ENCODE measurements at regions of chr1 and their contacts with region 1.

Region 1: DNA sequence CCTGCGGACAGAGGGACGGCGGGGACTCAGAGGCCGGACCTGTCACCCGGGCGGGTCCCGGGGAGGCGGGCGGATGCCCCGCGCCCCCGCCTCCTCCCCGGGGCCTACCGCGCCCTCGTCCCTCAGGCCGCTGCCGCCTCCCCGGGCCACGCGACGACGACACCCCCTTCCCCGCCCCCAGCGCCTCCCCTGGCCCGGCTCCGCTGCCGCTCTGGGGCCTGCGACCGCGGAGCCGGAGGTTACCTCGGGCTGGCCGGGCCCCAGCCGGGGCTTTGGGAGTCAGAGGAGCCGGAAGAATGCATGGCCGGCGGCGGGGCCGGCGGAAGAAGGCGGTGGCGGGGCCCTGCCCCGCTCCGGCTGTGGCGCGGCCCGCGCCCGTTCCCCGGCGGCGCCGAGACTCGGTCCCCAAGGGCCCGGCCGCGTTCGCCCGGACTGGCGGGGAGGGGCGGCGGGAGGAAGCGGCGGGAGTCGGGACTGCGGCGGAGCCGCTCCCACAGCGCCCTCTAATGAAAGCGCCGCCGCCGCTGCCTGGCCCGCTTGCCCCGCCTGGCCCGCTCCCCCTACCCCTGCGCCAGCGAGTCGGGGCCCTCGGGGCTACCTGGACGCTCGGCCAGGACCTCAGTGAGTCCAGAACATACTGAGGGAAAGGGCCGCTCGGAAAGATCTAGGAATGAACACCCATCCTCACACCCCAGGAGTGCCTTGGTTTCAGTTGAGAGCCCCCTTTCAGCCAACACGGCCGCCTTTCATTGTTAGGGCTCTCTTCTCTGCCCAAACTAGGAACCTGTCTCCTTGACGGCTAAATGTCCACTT is at the start of gene LPGAT1:
- DNase-seq: peak; percentile 86
- ATAC-seq: peak; percentile 83
- H3K4me3 Mint-ChIP-seq: peak within 1 kb of the TSS; percentile 82
- H3K27ac Mint-ChIP-seq: peak within 1 kb of the TSS; percentile 85
- H3K4me1 Mint-ChIP-seq: peaks cover 57% of the 10 kb centered on the region
- H3K27me3 Mint-ChIP-seq: no peaks in the 10 kb centered on the region
- total RNA-seq, gene LPGAT1: 21.7 to 24.9 TPM

Region 2: GRCh38 chr1:211680752-211681327 is 149.7 kb before region 1 on chr1:
- CTCF ChIA-PET with region 1: interaction called, 5 read pairs
- POLR2A ChIA-PET with region 1: no interaction called
- intact Hi-C with region 1: loop called (anchors 1 to 5 kb)
- DNase-seq: peak; percentile 85
- ATAC-seq: peak; percentile 94
- H3K4me3 Mint-ChIP-seq: no peak overlapping the region
- H3K27ac Mint-ChIP-seq: peak overlapping the region; percentile 71
- H3K4me1 Mint-ChIP-seq: peaks cover 7% of the 10 kb centered on the region
- H3K27me3 Mint-ChIP-seq: no peaks in the 10 kb centered on the region

Region 3: DNA sequence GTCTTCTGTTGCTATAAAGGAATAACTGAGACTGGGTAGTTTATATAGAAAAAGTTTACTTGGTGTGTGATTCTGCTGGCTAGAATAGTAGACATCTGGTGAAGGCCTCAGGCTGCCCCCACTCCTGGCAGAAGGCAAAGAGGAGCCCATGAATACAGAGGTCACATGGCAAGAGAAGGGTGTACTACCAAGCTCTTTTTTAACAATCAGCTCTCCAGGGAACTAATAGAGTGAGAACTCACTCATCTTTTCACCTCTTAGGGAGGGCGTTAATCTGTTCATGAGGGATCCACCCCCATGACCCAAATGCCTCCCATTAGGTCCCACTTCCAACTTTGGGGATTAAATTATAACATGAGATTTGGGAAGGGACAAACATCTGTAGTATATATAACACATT is 214.3 kb after region 1 on chr1:
- CTCF ChIA-PET with region 1: no interaction called
- POLR2A ChIA-PET with region 1: no interaction called
- intact Hi-C with region 1: no loop called
- DNase-seq: no peak
- ATAC-seq: no peak
- H3K4me3 Mint-ChIP-seq: no peak overlapping the region
- H3K27ac Mint-ChIP-seq: no peak overlapping the region
- H3K4me1 Mint-ChIP-seq: peaks cover 10% of the 10 kb centered on the region
- H3K27me3 Mint-ChIP-seq: peaks cover 3% of the 10 kb centered on the region